ENCODE measurements at regions of chr12 and their contacts with region 1.

Region 1: GRCh38 chr12:49974231-49974675 is 1.5 kb downstream of the AQP6 start:
- DNase-seq: peak; percentile 63 to 77 (median 74)
- ATAC-seq: peak; percentile 84
- H3K4me3 ChIP-seq: no peak overlapping the region
- H3K27ac ChIP-seq: no peak overlapping the region
- H3K4me1 ChIP-seq: peaks cover 5% of the 10 kb centered on the region
- H3K27me3 ChIP-seq: no peaks in the 10 kb centered on the region
- CTCF ChIP-seq: peak in 6 of 7 experiments; percentile 34 to 61 (median 54)
- POLR2A ChIP-seq: no peak

Region 2: DNA sequence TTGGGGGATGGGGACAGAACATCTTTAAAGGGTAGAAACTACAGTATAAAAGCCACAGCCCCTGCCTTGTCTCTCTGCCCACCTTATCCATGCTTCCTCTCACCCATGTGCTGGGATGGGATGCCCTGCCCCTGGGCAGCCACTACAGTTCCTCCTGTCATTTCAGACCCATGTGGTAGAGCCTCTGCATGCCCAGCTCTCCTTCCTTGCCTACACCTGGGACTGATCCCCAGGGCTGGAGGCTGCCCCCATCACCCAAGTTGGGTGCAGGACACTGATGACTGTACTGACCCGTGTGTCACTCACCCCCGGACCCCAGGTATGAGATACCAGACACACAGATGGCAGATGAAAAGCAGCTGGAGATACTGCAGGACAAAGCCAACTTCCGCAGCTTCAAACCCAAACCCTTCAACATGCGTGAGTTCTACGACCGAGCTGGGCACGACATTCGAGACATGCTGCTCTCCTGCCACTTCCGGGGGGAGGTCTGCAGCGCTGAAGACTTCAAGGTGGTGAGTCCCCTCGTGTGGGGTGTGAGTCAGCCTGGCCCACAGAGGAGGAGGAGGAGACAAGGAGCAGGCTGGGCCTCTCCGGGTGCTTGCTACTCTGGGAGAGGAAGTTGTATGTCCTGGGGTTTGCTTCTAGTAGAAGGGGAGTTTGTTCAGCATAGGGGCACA is 85.3 kb after region 1 on chr12:
- intact Hi-C with region 1: loop called (anchors 5 kb)
- DNase-seq: no peak
- ATAC-seq: no peak
- H3K4me3 ChIP-seq: no peak overlapping the region
- H3K27ac ChIP-seq: no peak overlapping the region
- H3K4me1 ChIP-seq: peaks cover 21% of the 10 kb centered on the region
- H3K27me3 ChIP-seq: peaks cover 0 to 10% of the 10 kb centered on the region in 2 donors
- CTCF ChIP-seq: no peak
- POLR2A ChIP-seq: no peak

Measured in body of pancreas (tissue), 4 donors.